ENCODE measurements at regions of chr1 and their contacts with region 1.

Region 1: DNA sequence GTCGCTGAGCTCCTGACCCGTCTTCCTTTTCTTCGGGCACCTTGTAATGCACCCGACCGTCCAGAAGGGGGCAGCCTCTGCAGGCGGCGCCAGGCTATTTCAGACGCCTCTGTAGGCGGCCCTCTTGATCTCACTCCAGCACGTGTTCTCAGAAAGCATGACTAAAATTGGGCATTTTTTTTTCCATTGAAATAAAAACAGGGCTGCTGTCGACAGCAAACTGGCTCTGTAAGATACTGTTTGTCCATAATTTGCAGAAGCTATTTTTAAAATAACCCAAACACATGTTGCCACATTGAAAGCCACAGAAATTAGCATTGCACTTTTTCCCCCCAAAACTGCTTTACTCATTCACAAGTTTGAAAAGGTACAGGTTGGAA is 78.0 kb downstream of the STUM start:
- DNase-seq: peak; percentile 68
- ATAC-seq: peak; percentile 93
- H3K4me3 Mint-ChIP-seq: peak overlapping the region; percentile 55
- H3K27ac Mint-ChIP-seq: peak overlapping the region; percentile 59
- H3K4me1 Mint-ChIP-seq: peaks cover 47% of the 10 kb centered on the region
- H3K27me3 Mint-ChIP-seq: no peaks in the 10 kb centered on the region
- CTCF ChIP-seq: peak; percentile 76

Region 2: GRCh38 chr1:225670806-225671733 is 955.5 kb before region 1 on chr1:
- CTCF ChIA-PET with region 1: no interaction called
- POLR2A ChIA-PET with region 1: no interaction called
- intact Hi-C with region 1: no loop called
- DNase-seq: no peak
- ATAC-seq: no peak
- H3K4me3 Mint-ChIP-seq: no peak overlapping the region
- H3K27ac Mint-ChIP-seq: no peak overlapping the region
- H3K4me1 Mint-ChIP-seq: no peaks in the 10 kb centered on the region
- H3K27me3 Mint-ChIP-seq: peaks cover 13% of the 10 kb centered on the region
- CTCF ChIP-seq: no peak

Region 3: DNA sequence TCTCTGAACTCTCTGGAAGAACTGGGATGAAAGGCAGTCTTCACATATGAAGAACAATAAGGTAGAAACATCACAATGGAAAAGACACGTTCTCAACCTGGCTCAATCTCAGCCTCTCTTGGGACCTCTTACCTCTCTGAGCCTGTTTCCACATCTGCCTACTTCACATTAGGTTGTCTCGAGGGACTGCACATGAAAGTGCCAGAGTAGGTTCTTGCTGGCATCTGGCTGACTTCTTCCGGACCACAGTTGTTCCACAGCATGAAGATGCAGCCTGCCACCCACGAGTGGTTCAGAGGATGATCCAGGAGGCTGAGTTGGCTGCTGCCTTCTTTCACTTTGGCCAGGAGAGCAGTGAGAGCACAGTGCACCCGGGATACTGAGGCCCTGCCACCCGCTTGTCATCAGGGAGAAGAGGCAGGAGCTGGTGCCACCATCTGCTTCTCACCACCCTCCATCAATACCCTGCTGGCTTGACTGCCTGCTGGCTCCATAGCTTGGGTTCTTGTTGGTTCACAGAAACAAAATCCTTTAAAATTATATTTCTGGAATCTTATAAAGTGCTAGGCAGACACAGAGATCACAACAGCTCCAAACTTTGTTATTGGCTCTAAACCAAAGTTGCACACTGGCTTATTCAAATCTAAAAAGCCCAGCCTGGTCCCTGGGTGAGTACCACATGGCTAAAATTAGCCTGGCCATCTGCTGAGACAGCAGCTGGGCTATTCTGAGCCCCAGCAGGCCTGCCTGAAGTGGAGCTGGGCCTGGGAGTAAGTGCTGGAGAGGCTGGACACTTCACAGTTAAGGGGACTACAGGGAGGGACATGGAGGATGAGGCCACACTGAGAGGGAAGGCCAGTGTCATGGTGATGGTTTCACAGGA is 270.7 kb before region 1 on chr1:
- CTCF ChIA-PET with region 1: no interaction called
- POLR2A ChIA-PET with region 1: no interaction called
- intact Hi-C with region 1: no loop called
- DNase-seq: no peak
- ATAC-seq: peak; percentile 69
- H3K4me3 Mint-ChIP-seq: peak overlapping the region; percentile 47
- H3K27ac Mint-ChIP-seq: peak overlapping the region; percentile 84
- H3K4me1 Mint-ChIP-seq: peaks cover 58% of the 10 kb centered on the region
- H3K27me3 Mint-ChIP-seq: no peaks in the 10 kb centered on the region
- CTCF ChIP-seq: no peak

Region 4: GRCh38 chr1:226506921-226507320 is 119.6 kb before region 1 on chr1:
- CTCF ChIA-PET with region 1: no interaction called
- POLR2A ChIA-PET with region 1: no interaction called
- intact Hi-C with region 1: no loop called
- DNase-seq: no peak
- ATAC-seq: no peak
- H3K4me3 Mint-ChIP-seq: no peak overlapping the region
- H3K27ac Mint-ChIP-seq: no peak overlapping the region
- H3K4me1 Mint-ChIP-seq: no peaks in the 10 kb centered on the region
- H3K27me3 Mint-ChIP-seq: peaks cover 36% of the 10 kb centered on the region
- CTCF ChIP-seq: no peak

Region 5: GRCh38 chr1:226642876-226643576 is 16.5 kb after region 1 on chr1:
- CTCF ChIA-PET with region 1: interaction called, 15 read pairs
- POLR2A ChIA-PET with region 1: interaction called, 8 read pairs
- intact Hi-C with region 1: no loop called
- DNase-seq: peak; percentile 52
- ATAC-seq: peak; percentile 63
- H3K4me3 Mint-ChIP-seq: peak overlapping the region; percentile 67
- H3K27ac Mint-ChIP-seq: peak overlapping the region; percentile 88
- H3K4me1 Mint-ChIP-seq: peaks cover 76% of the 10 kb centered on the region
- H3K27me3 Mint-ChIP-seq: no peaks in the 10 kb centered on the region
- CTCF ChIP-seq: no peak

Region 6: DNA sequence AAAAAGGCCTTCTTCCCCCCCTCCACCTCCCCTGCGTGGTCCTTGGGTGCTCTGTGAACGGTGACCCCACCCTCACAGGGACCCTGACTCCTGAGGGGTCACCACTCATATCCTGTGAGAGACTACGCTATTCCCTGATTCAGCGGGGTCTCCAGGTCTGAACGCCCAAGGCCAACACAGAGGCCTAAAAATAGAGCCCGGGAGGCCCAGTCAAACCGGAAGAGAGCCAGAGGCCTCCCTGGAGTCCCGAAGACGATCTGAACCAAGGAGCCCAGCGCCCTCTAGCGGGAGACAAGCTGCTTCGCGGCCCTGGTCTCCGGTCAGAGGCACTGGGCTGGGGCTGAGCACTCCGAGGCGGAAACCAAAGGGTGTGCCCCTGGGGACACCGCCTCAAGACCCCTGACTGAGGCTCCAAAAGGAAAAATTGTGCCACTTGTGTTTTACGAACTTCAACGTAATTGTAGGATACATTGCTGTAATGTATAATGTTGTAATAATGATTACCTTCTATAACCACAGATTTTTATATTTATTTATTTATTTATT is 201.5 kb after region 1 on chr1:
- CTCF ChIA-PET with region 1: interaction called, 91 read pairs
- POLR2A ChIA-PET with region 1: interaction called, 6 read pairs
- intact Hi-C with region 1: loop called (anchors 1 kb)
- DNase-seq: peak; percentile 82
- ATAC-seq: peak; percentile 97
- H3K4me3 Mint-ChIP-seq: peak overlapping the region; percentile 58
- H3K27ac Mint-ChIP-seq: peak overlapping the region; percentile 80
- H3K4me1 Mint-ChIP-seq: peaks cover 37% of the 10 kb centered on the region
- H3K27me3 Mint-ChIP-seq: no peaks in the 10 kb centered on the region
- CTCF ChIP-seq: peak; percentile 67

Region 7: GRCh38 chr1:226940029-226940805 is 313.6 kb after region 1 on chr1 and contains the start of gene COQ8A:
- CTCF ChIA-PET with region 1: no interaction called
- POLR2A ChIA-PET with region 1: no interaction called
- intact Hi-C with region 1: loop called (anchors 1 kb)
- DNase-seq: peak; percentile 97
- ATAC-seq: peak; percentile 93
- H3K4me3 Mint-ChIP-seq: peak within 1 kb of the TSS; percentile 89
- H3K27ac Mint-ChIP-seq: peak within 1 kb of the TSS; percentile 96
- H3K4me1 Mint-ChIP-seq: peaks cover 49% of the 10 kb centered on the region
- H3K27me3 Mint-ChIP-seq: no peaks in the 10 kb centered on the region
- CTCF ChIP-seq: no peak
- total RNA-seq, gene COQ8A: 24.7 and 28.5 TPM in 2 replicates

Region 8: DNA sequence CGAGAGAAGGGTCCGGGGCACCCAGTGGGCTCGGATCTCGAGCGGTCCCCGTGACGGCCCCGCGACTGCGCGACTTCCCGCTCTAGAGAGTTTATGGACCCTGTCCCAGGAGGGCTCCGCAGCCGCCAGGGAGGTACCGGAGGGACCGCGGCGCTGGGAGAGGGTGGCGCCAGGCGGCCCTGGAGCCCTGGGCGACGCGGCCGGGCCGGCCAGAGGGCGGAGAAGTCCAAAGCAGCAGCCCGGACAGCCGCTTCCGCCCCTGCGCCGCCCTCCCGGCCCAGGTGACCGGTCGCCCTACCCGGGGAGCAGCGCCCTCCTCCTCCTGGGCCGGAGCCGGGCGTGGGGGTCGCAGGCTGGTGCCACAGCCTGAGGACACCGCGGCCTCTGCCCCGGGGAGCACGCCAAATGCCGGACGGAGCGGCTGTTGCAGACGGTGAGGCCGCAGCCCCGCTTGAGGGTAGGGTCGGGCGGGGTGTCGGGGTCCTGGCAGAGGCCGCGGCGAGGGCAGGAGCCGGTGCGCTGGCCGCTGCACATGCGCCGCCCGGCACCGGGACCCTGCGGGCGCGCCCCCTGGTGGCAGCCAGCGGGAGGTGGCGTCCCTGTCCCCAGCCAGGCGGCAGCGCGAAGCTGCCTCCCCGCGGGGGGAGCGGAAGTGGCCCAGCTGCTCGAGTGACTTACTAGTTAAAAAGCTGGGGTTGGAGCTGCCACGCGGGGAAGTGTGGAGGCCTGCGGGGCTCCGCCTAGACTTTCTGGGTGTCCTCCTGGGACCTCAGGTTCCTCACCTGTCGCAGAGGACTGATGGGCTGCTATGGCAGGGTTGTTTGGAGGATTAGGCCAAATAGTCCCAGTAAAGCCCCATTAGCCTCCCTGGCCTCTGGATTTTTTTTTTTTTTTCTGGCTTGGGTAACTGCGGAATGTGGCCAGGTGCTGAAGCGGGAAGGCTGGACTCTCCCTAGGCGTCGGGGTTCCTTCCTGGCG is 915.9 kb after region 1 on chr1:
- CTCF ChIA-PET with region 1: no interaction called
- POLR2A ChIA-PET with region 1: no interaction called
- intact Hi-C with region 1: loop called (anchors 5 kb)
- DNase-seq: peak; percentile 90
- ATAC-seq: peak; percentile 97
- H3K4me3 Mint-ChIP-seq: peak overlapping the region; percentile 68
- H3K27ac Mint-ChIP-seq: no peak overlapping the region
- H3K4me1 Mint-ChIP-seq: peaks cover 5% of the 10 kb centered on the region
- H3K27me3 Mint-ChIP-seq: no peaks in the 10 kb centered on the region
- CTCF ChIP-seq: peak; percentile 65

Measured in activated B cell treated with CpG ODN at 0.5 μM for 24 hours (primary cell).